ENCODE measurements at regions of chr1 and their contacts with region 1.

Region 1: GRCh38 chr1:202589190-202590030 is 120.8 kb downstream of the SYT2 start:
- DNase-seq: peak; percentile 99
- H3K4me3 ChIP-seq: no peak overlapping the region
- H3K27me3 ChIP-seq: no peaks in the 10 kb centered on the region
- CTCF ChIP-seq: peak; percentile 22; the same call in 1 of the 2 replicates

Region 2: DNA sequence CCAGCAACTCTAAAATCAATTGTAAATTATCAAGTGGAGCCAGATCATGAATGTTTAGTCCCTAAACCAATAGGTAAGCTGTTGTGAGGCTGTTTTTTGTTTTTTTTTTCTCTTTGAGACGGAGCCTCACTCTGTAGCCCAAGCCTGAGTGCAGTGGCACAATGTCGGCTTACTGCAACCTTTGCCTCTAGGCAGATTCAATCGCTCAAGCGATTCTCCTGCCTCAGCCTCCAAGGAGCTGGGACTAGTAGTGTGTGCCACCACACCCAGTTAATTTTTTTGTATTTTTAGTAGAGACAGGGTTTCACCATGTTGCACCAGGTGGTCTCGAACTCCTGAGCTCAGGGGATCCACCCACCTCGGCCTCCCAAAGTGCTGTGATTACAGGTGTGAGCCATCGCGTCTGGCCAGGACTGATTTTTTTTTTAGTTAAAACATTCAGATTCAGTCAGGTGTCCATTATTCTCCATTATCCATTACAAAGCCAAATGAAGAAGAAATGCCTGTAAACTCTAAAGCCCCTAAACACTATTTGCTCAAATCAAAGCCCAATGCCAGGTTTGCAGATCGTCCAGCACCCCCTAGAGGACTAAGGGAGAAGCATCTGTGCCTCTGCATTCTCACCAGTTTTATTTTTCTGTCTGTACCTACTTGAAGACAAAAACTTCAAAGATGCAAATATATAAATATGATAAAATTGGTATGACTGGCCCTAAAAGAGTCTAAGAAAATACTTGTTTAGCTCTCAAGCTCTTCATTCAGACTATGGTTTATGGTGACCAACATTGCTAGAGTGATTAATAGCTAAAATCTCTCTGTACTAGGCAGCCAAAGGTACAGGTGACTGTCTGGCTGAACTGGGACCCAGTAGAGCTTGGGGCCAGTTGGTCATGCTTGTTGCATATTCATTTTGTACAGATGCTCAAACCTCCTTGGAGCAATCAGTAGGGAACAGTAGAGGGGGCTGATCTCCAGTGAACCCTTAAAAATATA is 17.8 kb before region 1 on chr1:
- CTCF ChIA-PET with region 1: interaction called, 25 read pairs
- POLR2A ChIA-PET with region 1: interaction called, 11 read pairs
- DNase-seq: no peak
- H3K4me3 ChIP-seq: no peak overlapping the region
- H3K27me3 ChIP-seq: no peaks in the 10 kb centered on the region
- CTCF ChIP-seq: peak; percentile 79

Region 3: GRCh38 chr1:202576816-202577215 is 12.6 kb before region 1 on chr1:
- CTCF ChIA-PET with region 1: interaction called, 25 read pairs
- POLR2A ChIA-PET with region 1: interaction called, 11 read pairs
- DNase-seq: peak; percentile 72
- H3K4me3 ChIP-seq: no peak overlapping the region
- H3K27me3 ChIP-seq: no peaks in the 10 kb centered on the region
- CTCF ChIP-seq: no peak

Measured in BJ (cell line).